Activated T-helper 1 cell treated with anti-CD3 and anti-CD28 coated beads, Interleukin-12 subunit alpha, Interleukin-12 subunit beta, Interleukin-2, Interleukin-4 antibody, amounts not matched to agents 30 ng/mL and 10 ng/mL and 1 ng/mL, durations not matched to agents 14 hours and 24 hours and 36 hours (primary cell): ENCODE measurements at regions of chr14 and their contacts with region 1.

Region 1: DNA sequence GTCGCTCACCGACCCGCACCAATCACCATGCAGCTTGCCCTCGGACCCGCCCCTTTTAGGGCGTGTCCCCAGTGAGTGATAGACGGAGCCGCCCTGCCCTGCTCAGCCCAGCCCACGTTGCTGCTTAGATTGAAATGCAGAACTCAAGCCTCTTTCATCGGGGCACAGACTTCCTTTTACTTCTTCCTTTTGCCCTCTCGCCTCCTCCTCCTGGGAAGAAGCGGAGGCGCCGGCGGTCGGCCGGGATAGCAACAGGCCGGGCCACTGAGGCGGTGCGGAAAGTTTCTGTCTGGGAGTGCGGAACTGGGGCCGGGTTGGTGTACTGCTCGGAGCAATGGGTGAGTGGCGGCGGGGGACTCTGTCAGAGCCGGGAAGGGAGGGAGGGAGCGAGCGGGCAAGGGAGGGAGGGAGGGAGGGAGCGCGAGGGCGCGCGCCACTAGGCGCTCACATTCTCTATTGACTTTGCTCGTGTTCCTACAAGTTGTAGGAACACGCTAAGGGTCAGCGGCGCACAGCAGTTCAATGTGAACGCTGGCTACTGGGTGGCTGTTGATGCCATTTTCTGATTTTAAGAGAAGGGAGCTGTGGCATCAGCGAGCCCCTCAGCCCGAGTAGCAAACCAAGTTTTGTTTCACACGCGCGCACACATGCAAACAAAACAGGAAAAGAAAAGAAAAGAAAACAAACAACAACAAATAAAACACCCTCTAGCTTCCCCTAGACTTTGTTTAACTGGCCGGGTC is at the start of gene PAX9:
- DNase-seq: no peak
- H3K4me3 Mint-ChIP-seq: peak within 1 kb of the TSS; percentile 15
- H3K27ac Mint-ChIP-seq: peak within 1 kb of the TSS; percentile 74
- H3K4me1 Mint-ChIP-seq: peaks cover 6% of the 10 kb centered on the region
- H3K27me3 Mint-ChIP-seq: peaks cover 81% of the 10 kb centered on the region
- total RNA-seq, gene PAX9: not detected in 2 replicates

Region 2: GRCh38 chr14:36941783-36942521 is 280.0 kb after region 1 on chr14:
- intact Hi-C with region 1: loop called (anchors 10 kb)
- DNase-seq: no peak
- H3K4me3 Mint-ChIP-seq: no peak overlapping the region
- H3K27ac Mint-ChIP-seq: no peak overlapping the region
- H3K4me1 Mint-ChIP-seq: no peaks in the 10 kb centered on the region
- H3K27me3 Mint-ChIP-seq: no peaks in the 10 kb centered on the region